ENCODE measurements at regions of chr2 and their contacts with region 1.

Region 1: GRCh38 chr2:160305081-160305760 is 105.1 kb upstream of the ITGB6 start:
- DNase-seq: no peak
- ATAC-seq: no peak
- H3K4me3 Mint-ChIP-seq: no peak overlapping the region
- H3K27ac Mint-ChIP-seq: no peak overlapping the region
- H3K4me1 Mint-ChIP-seq: peaks cover 28% of the 10 kb centered on the region
- H3K27me3 Mint-ChIP-seq: no peaks in the 10 kb centered on the region

Region 2: DNA sequence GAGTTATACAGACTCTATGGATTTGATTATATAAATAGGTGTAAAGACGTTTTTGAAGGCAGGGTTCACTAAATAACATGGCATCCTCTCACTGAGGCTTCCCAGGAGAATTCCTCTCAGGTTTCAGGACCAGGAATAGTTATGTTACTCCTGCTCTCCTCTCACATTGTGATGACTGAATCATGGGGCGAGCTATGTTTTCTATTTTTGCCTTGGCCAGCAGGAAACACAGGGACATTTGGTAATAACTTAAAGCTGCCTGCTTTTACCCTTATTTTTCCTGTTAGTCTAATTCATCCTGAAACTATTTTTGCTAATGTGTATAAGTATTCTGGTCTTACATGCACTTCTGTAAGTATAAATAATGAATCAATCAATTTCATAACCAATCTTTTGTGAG is 10.1 kb after region 1 on chr2:
- CTCF ChIA-PET with region 1: interaction called, 27 read pairs
- POLR2A ChIA-PET with region 1: interaction called, 3 read pairs
- intact Hi-C with region 1: no loop called
- DNase-seq: no peak
- ATAC-seq: no peak
- H3K4me3 Mint-ChIP-seq: no peak overlapping the region
- H3K27ac Mint-ChIP-seq: no peak overlapping the region
- H3K4me1 Mint-ChIP-seq: peaks cover 35% of the 10 kb centered on the region
- H3K27me3 Mint-ChIP-seq: no peaks in the 10 kb centered on the region